ENCODE measurements at regions of chr13 and their contacts with region 1.

Region 1: GRCh38 chr13:96020155-96020575 is 33.0 kb downstream of the UGGT2 start:
- DNase-seq: peak; percentile 70
- H3K4me3 Mint-ChIP-seq: no peak overlapping the region
- H3K27ac Mint-ChIP-seq: peak overlapping the region; percentile 32
- H3K4me1 Mint-ChIP-seq: no peaks in the 10 kb centered on the region
- H3K27me3 Mint-ChIP-seq: no peaks in the 10 kb centered on the region
- CTCF ChIP-seq: peak; percentile 89

Region 2: GRCh38 chr13:94327318-94327717 is 1692.8 kb before region 1 on chr13:
- CTCF ChIA-PET with region 1: no interaction called
- POLR2A ChIA-PET with region 1: no interaction called
- intact Hi-C with region 1: no loop called
- DNase-seq: no peak
- H3K4me3 Mint-ChIP-seq: no peak overlapping the region
- H3K27ac Mint-ChIP-seq: no peak overlapping the region
- H3K4me1 Mint-ChIP-seq: peaks cover 18% of the 10 kb centered on the region
- H3K27me3 Mint-ChIP-seq: no peaks in the 10 kb centered on the region
- CTCF ChIP-seq: no peak

Region 3: DNA sequence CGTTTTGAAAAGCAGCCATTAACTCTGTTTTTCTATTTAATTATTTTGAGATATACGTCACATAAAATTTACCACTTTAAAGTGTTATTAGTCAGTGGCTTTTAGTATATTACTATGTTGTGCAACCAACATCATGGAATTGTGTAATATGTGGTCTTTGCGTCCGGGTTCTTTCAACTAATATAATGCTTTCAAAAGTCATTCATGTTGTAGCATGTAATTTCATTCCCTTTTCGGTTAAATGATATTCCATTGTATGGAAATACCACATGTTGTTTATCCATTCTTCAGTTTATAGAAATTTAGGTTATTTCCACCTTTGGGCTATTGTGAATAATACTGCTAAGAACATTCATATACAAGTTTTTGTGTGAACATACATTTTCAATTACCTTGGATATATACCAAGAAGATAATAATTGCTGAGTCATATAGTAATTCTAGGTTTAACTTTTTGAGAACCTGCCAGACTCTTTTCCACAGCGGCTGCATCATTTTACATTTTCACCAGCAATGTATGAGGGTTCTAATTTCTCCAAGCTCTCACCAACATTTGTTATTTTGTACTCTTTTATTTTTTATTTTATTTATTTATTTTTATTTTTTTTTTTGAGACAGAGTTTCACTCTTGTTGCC is 495.8 kb before region 1 on chr13:
- CTCF ChIA-PET with region 1: no interaction called
- POLR2A ChIA-PET with region 1: no interaction called
- intact Hi-C with region 1: no loop called
- DNase-seq: peak; percentile 95
- H3K4me3 Mint-ChIP-seq: no peak overlapping the region
- H3K27ac Mint-ChIP-seq: peak overlapping the region; percentile 82
- H3K4me1 Mint-ChIP-seq: peaks cover 24% of the 10 kb centered on the region
- H3K27me3 Mint-ChIP-seq: no peaks in the 10 kb centered on the region
- CTCF ChIP-seq: no peak

Region 4: DNA sequence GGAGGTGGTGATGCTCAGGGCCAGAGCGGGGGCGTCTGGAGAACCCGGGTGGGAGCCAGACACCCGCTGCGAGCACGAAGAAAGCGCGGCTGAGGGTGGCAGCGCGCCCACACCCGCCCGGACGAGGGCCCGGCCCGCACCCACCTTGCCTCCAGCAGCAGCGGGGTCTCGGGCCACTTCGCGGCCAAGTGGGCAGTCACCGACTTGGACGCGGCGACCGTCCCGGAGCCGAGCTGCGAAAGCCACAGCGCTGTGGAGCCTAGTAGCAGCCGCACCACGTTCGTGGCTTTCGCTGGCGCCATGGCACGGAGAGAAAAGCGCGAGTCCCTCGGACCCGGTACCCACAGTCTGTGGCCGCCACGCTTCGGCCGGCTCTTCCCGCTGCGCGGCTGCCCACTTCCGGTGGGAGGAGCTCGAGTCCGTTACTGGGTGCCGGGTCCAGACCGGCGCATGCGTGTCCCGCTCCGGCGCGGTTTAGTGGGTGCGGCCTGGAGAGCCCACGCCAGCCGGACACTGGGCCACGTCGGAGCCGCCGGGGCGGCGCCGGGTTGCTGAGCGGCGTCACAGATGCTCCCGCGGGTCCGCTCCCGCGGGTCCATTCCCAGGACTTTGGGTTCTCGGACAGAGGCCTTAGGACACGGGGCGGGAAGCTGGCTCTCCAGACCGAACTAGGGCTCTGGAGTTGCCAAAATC is 33.0 kb after region 1 on chr13 and contains the start of gene UGGT2:
- CTCF ChIA-PET with region 1: interaction called, 6 read pairs
- POLR2A ChIA-PET with region 1: interaction called, 28 read pairs
- intact Hi-C with region 1: no loop called
- DNase-seq: peak; percentile 97
- H3K4me3 Mint-ChIP-seq: peak within 1 kb of the TSS; percentile 95
- H3K27ac Mint-ChIP-seq: peak within 1 kb of the TSS; percentile 92
- H3K4me1 Mint-ChIP-seq: peaks cover 23% of the 10 kb centered on the region
- H3K27me3 Mint-ChIP-seq: no peaks in the 10 kb centered on the region
- CTCF ChIP-seq: no peak
- total RNA-seq, gene UGGT2: 54.0 and 57.1 TPM in 2 replicates

Region 5: DNA sequence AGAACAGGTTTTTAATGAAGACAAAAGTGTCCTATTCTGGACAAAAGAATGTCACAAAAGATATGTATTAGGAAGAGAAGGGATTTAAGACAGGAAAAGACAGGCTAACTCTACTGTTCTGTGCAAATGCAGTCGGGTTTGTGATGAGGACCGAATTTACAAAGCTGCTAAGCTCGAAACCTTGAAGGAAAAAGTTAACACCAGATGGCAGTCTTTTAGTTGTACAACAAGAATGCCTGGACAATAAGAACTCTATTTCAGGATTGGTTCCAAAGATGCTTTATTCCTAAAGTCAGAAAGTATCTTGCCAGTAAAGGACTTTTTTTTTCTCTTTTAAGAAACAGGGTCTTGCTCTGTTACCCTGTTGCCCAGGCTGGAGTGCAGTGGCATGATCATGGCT is 120.9 kb after region 1 on chr13:
- CTCF ChIA-PET with region 1: interaction called, 16 read pairs
- POLR2A ChIA-PET with region 1: no interaction called
- intact Hi-C with region 1: loop called (anchors 2 kb)
- DNase-seq: peak; percentile 52
- H3K4me3 Mint-ChIP-seq: no peak overlapping the region
- H3K27ac Mint-ChIP-seq: no peak overlapping the region
- H3K4me1 Mint-ChIP-seq: no peaks in the 10 kb centered on the region
- H3K27me3 Mint-ChIP-seq: no peaks in the 10 kb centered on the region
- CTCF ChIP-seq: peak; percentile 43

Region 6: DNA sequence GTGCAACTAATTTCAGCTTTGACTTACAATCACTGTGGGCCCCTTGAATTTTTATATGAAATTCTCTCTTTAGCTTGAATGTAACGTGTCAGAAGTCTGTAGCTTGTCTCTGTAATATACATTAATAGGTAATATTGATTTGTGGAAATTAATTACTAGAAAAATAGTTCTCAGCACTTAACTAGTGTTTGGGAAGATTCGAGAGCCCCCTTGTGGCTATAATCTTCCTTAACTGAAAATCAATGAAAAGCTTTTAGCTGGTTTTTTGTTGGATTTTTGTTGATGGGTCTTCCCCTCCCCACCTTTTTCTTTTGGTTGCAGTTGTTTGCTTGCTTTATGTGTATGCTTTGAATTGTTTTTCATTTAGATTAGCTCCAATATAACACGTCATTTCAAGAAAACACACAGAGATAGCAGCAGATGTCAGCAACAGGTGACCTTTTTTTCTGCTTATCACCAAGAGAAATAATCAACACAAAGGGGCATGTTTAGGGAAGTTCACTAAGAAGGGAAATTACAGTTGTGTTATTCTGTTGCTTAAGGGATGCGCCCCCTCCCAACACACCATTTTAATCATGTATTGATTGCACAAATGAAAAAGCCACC is 797.3 kb after region 1 on chr13:
- CTCF ChIA-PET with region 1: interaction called, 135 read pairs
- POLR2A ChIA-PET with region 1: interaction called, 9 read pairs
- intact Hi-C with region 1: loop called (anchors 1 kb)
- DNase-seq: peak; percentile 55
- H3K4me3 Mint-ChIP-seq: no peak overlapping the region
- H3K27ac Mint-ChIP-seq: no peak overlapping the region
- H3K4me1 Mint-ChIP-seq: peaks cover 6% of the 10 kb centered on the region
- H3K27me3 Mint-ChIP-seq: no peaks in the 10 kb centered on the region
- CTCF ChIP-seq: peak; percentile 67

Region 7: GRCh38 chr13:96967248-96967745 is 947.1 kb after region 1 on chr13:
- CTCF ChIA-PET with region 1: interaction called, 22 read pairs
- POLR2A ChIA-PET with region 1: no interaction called
- intact Hi-C with region 1: no loop called
- DNase-seq: peak; percentile 35
- H3K4me3 Mint-ChIP-seq: no peak overlapping the region
- H3K27ac Mint-ChIP-seq: no peak overlapping the region
- H3K4me1 Mint-ChIP-seq: no peaks in the 10 kb centered on the region
- H3K27me3 Mint-ChIP-seq: peaks cover 11% of the 10 kb centered on the region
- CTCF ChIP-seq: peak; percentile 33